Panc1 (cell line): ENCODE measurements at regions of chr17 and their contacts with region 1.

Region 1: DNA sequence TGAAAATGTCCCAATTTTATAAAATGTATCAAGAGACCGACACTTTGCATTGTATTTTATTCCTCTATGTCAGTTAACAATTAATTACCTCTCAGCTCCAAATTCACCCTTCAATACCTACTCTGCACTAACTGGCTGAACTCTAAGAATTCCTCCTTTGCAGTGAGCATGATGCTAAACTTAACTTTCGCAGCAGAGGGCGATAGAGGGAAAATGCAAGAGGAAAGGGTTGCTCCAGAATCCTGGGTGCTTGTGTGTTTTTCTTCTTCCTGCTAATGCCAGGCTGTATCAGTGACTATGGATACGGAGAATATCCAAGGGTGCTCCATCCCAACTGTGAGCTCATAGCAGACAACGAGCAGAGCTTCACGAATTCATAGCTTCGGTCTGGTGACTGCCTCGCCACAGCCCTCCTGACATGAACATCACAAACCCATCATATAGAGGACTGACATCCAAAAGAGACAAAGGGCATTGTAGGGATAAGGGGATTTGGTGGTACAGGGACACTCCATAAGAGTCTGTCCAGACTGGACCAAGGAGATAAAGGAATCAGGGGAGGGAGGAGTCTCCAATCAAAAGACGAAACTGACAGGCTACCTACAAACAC is 172.9 kb downstream of the STX8 start:
- DNase-seq: no peak
- ATAC-seq: no peak
- H3K4me3 ChIP-seq: no peak overlapping the region
- H3K27ac ChIP-seq: no peak overlapping the region
- H3K4me1 ChIP-seq: no peaks in the 10 kb centered on the region
- H3K27me3 ChIP-seq: no peaks in the 10 kb centered on the region
- CTCF ChIP-seq: peak; percentile 75

Region 2: DNA sequence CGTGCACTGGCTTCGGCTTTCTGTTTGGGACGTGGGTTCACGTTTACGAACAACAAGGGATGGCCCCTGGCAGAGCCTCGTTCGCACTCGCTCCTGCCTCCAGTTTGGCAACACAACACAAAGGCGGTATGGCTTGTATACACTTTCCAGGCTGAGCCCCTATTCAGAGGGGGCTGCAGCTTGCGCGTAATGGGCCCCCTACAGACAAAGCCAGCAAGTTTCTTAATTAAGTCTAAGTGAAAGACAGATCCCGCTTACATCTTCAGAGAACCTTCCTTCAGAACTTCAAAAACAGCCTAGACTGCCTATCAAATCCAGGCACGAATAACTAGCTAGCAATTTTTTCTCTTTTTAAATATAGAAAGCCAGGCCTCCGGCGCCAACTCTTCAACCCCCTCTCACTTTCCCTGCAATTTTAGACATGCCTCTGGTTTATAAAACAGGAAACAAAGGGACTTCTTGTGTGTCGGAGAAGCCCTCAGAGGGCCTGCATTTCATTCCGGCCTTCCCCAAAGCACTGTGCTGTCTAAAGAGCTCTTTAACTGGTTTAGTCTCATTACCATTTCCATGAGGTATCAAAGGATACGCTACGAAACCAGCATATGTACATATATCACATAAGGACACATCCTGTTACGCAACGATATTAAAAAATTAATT is 72.0 kb before region 1 on chr17:
- CTCF ChIA-PET with region 1: no interaction called
- POLR2A ChIA-PET with region 1: no interaction called
- in situ Hi-C with region 1: no loop called
- intact Hi-C with region 1: no loop called
- DNase-seq: no peak
- ATAC-seq: no peak
- H3K4me3 ChIP-seq: no peak overlapping the region
- H3K27ac ChIP-seq: no peak overlapping the region
- H3K4me1 ChIP-seq: no peaks in the 10 kb centered on the region
- H3K27me3 ChIP-seq: no peaks in the 10 kb centered on the region
- CTCF ChIP-seq: no peak

Region 3: GRCh38 chr17:9522074-9522473 is 119.4 kb after region 1 on chr17:
- CTCF ChIA-PET with region 1: no interaction called
- POLR2A ChIA-PET with region 1: no interaction called
- in situ Hi-C with region 1: no loop called
- intact Hi-C with region 1: loop called (anchors 10 kb)
- DNase-seq: peak; percentile 15
- ATAC-seq: peak; percentile 81; the same call in 1 of the 2 replicates
- H3K4me3 ChIP-seq: no peak overlapping the region
- H3K27ac ChIP-seq: no peak overlapping the region
- H3K4me1 ChIP-seq: no peaks in the 10 kb centered on the region; the same call in 1 of the 2 replicates
- H3K27me3 ChIP-seq: no peaks in the 10 kb centered on the region
- CTCF ChIP-seq: peak; percentile 60